Pancreas (tissue), 10 donors: ENCODE measurements at regions of chr18 and their contacts with region 1.

Region 1: DNA sequence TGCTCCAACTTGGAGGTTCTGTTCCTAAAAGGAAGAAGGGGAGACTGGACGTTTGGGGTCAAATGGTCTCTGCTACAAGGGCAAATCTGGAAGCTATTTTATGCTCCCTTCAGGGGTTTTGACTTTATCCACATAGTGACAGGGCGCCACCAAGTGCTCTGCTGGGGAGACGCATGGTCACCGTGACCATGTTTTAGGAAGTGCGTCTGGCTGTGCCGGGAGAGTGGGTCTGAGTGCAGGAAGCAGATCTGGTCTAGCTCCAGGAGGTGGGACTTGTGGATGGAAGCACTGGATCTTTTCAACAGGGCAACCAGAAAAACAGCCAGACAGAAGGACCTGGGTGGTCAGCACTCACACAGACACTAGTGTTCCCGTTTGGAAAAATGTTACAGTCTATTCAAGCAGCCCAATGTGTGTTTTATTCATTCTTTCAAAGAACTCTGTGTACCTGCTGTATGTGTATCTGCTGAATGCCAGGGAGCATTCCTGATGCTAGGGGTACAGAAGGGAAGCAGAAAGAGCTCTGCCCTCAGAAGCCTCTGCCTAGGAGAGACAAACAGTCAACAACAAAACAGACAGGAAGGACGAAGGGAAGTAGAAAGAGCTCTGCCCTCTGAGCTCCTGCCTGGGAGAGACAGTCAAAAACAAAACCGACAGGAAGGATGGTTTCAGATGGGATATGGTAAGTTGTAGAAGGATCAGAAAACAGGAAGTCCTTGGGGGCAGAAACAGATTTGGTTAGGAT is 14.3 kb downstream of the IMPA2 start:
- DNase-seq: peak; percentile 75 to 81 (median 80)
- ATAC-seq: peak; percentile 71 to 87 (median 82)
- H3K4me3 ChIP-seq: peak overlapping the region in 1 of 4 donors; percentile 5
- H3K27ac ChIP-seq: peak overlapping the region; percentile 66 to 86 (median 72)
- H3K4me1 ChIP-seq: peaks cover 71 to 81% (median 79%) of the 10 kb centered on the region in 3 donors
- H3K27me3 ChIP-seq: no peaks in the 10 kb centered on the region
- CTCF ChIP-seq: peak; percentile 12 to 65 (median 55)

Region 2: GRCh38 chr18:11937874-11938478 is 57.6 kb before region 1 on chr18:
- intact Hi-C with region 1: loop called in 2 of 3 experiments (anchors 5 kb)
- DNase-seq: peak; percentile 61 to 90 (median 78)
- ATAC-seq: peak; percentile 92 to 98 (median 96)
- H3K4me3 ChIP-seq: no peak overlapping the region
- H3K27ac ChIP-seq: no peak overlapping the region
- H3K4me1 ChIP-seq: no peaks in the 10 kb centered on the region
- H3K27me3 ChIP-seq: no peaks in the 10 kb centered on the region
- CTCF ChIP-seq: peak; percentile 40 to 72 (median 66)